ENCODE measurements at regions of chr7 and their contacts with region 1.

Region 1: DNA sequence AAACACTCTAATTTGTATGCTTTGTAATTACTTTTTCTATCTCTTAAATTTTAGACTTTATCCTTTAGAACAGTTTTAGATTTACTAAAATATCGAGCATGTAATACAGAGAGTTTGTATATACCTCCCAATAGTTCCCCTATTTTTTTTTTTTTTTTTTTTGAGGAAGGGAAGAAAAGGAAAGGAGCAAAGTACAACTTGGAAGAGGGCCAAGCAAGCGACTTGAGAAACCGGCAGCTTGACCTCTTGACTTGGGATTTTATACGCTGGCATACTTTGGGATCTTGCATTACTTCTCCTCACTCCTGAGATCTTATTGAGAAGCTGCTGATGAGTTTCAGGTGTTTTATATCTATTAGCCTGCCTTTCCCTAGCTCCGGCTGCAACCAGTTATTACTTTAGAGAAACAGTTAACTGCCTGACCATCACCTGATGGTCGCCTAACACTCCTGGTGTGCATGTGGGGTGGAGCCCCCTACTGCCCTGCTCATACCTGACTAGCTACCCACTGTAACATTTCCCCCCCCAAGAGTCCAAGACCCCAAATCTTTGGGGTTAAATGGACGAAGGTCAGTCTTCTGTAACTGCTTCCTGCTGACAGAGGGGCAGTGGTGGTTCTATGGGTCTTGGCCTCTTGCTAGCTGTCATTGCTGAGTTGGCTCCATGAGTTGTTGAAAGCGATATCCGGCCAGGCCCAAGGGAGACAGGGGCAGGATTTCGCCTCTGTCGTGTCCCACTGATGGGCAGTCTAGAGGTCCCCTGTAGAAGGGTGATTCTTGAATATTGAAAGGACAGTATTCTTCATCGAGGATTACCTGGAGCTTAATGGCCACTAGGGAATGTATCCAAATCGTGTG is 28.5 kb downstream of the MKLN1 start:
- DNase-seq: no peak
- H3K4me3 Mint-ChIP-seq: no peak overlapping the region
- H3K27ac Mint-ChIP-seq: no peak overlapping the region
- H3K4me1 Mint-ChIP-seq: peaks cover 45% of the 10 kb centered on the region
- H3K27me3 Mint-ChIP-seq: no peaks in the 10 kb centered on the region

Region 2: GRCh38 chr7:130127821-130128317 is 1228.3 kb before region 1 on chr7:
- intact Hi-C with region 1: no loop called
- DNase-seq: no peak
- H3K4me3 Mint-ChIP-seq: no peak overlapping the region
- H3K27ac Mint-ChIP-seq: no peak overlapping the region
- H3K4me1 Mint-ChIP-seq: no peaks in the 10 kb centered on the region
- H3K27me3 Mint-ChIP-seq: no peaks in the 10 kb centered on the region

Region 3: DNA sequence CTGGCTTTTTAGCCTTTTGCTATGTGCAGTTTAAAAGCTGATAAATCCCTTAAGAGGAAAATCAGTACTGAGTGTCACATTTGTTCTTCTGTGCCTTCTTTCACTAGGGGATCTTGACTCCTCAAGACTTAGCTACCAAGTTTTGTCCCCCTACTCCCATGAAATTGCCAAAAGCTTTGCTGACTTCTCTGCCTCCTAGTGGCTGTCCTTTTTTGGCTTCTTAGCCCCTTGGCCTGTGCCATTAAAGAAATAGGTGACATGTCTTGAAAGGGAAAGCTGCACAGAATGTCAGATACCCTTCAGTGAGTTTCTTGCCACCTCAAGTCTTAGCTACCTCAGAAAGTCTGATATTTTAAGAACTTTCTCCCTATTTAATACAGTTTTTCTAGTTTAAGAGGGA is 18.0 kb before region 1 on chr7:
- intact Hi-C with region 1: loop called (anchors 2 kb)
- DNase-seq: no peak
- H3K4me3 Mint-ChIP-seq: no peak overlapping the region
- H3K27ac Mint-ChIP-seq: no peak overlapping the region
- H3K4me1 Mint-ChIP-seq: peaks cover 20% of the 10 kb centered on the region
- H3K27me3 Mint-ChIP-seq: no peaks in the 10 kb centered on the region

Measured in activated T-helper 1 cell treated with anti-CD3 and anti-CD28 coated beads, Interleukin-12 subunit alpha, Interleukin-12 subunit beta, Interleukin-2, Interleukin-4 antibody, amounts not matched to agents 30 ng/mL and 10 ng/mL and 1 ng/mL, durations not matched to agents 14 hours and 24 hours and 36 hours (primary cell).